Mucosa of descending colon (tissue), 3 donors: ENCODE measurements at regions of chr1 and their contacts with region 1.

Region 1: DNA sequence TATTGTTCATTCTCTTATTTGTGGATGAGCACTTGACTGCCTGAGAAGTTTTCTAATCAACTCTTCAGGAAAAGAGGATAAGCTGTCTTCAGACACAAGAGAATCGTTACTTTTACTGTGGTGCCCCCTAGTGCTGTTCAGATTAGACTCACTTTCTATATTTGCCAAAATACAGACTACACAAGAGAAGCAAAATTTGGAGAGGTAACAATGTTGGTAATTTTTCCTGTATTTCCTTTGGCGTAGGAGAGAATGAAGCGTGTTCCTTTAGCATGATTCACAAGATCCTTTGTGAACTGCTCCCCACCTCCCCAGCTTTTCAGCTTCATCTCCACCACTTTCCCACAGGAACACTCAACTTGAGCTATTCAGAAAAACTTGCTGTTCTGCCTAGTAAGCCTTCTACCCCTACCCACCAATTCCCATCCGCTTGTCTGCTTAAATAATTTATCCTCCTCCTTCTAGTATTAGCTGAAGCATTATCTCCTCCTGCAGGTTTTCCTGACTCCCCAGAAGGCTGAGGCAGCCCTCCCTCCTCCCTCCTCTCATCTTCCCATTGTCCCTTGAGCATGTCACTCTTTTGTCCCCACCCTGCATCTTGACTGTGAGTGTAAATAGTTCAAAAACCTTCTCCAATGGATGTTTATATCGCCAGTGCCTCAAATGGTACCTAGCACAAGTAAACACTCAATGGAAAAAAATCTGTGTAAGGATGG is 4.5 kb downstream of the TNFSF4 start:
- DNase-seq: peak in 1 of 3 donors; percentile 84
- ATAC-seq: peak; percentile 58
- H3K4me3 ChIP-seq: no peak overlapping the region
- H3K4me1 ChIP-seq: peaks cover 7% of the 10 kb centered on the region
- CTCF ChIP-seq: no peak

Region 2: GRCh38 chr1:172745014-172745413 is 457.6 kb before region 1 on chr1:
- intact Hi-C with region 1: loop called (anchors 5 to 10 kb)
- DNase-seq: peak in 1 of 3 donors; percentile 79
- ATAC-seq: peak; percentile 82
- H3K4me3 ChIP-seq: no peak overlapping the region
- H3K4me1 ChIP-seq: peaks cover 17% of the 10 kb centered on the region
- CTCF ChIP-seq: no peak

Region 3: DNA sequence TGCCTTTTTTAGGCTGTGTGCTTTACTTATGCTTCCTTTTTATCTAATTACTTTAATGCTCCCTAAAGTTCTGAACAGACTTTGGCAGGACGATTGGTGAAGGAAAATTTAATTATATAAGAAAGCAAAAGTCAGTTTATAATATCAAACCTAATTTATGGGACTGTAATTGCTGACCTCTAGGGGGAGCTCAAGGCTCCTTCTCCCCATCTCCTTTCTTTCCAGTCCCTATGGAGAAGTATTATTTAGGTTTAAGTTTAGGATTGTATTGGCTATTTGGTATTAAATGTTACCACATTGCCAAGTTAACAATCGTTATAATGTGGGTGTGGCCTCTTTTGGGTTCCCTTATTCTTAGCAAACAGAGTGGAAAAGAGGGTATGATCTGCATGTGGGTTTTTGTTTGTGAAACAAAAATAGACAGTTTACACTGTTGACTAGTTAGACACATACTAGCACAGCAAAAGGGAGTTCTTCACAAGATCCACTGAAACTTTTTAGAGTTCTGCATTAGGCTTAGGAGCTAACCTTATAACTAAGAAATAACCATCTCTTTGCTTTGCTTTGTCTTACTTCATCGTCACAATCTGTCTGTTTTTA is 52.7 kb after region 1 on chr1:
- intact Hi-C with region 1: no loop called
- DNase-seq: peak in 1 of 3 donors; percentile 58
- ATAC-seq: no peak
- H3K4me3 ChIP-seq: no peak overlapping the region
- H3K4me1 ChIP-seq: no peaks in the 10 kb centered on the region
- CTCF ChIP-seq: peak; percentile 43

Region 4: GRCh38 chr1:173295995-173296394 is 93.4 kb after region 1 on chr1:
- intact Hi-C with region 1: no loop called
- DNase-seq: no peak
- ATAC-seq: no peak
- H3K4me3 ChIP-seq: no peak overlapping the region
- H3K4me1 ChIP-seq: no peaks in the 10 kb centered on the region
- CTCF ChIP-seq: no peak

Region 5: GRCh38 chr1:173867753-173868265 is 665.2 kb after region 1 on chr1 and contains the start of gene GAS5:
- intact Hi-C with region 1: no loop called
- DNase-seq: peak; percentile 99 to 100 (median 99)
- ATAC-seq: peak; percentile 89
- H3K4me3 ChIP-seq: peak within 1 kb of the TSS; percentile 56
- H3K4me1 ChIP-seq: peaks cover 12% of the 10 kb centered on the region
- CTCF ChIP-seq: no peak
- total RNA-seq, gene GAS5: 207 to 252 (median 224) TPM